ENCODE measurements at regions of chr2 and their contacts with region 1.

Region 1: GRCh38 chr2:179440642-179441251 is 176.1 kb upstream of the SESTD1 start:
- DNase-seq: peak in 2 of 9 experiments; percentile 14 to 49
- ATAC-seq: no peak
- H3K4me3 ChIP-seq: no peak overlapping the region
- H3K4me3 Mint-ChIP-seq: no peak overlapping the region
- H3K27ac ChIP-seq: no peak overlapping the region
- H3K27ac Mint-ChIP-seq: no peak overlapping the region
- H3K4me1 ChIP-seq: no peaks in the 10 kb centered on the region
- H3K4me1 Mint-ChIP-seq: no peaks in the 10 kb centered on the region
- H3K27me3 ChIP-seq: no peaks in the 10 kb centered on the region
- H3K27me3 Mint-ChIP-seq: peaks cover 18% of the 10 kb centered on the region
- CTCF ChIP-seq: peak; percentile 63

Region 2: DNA sequence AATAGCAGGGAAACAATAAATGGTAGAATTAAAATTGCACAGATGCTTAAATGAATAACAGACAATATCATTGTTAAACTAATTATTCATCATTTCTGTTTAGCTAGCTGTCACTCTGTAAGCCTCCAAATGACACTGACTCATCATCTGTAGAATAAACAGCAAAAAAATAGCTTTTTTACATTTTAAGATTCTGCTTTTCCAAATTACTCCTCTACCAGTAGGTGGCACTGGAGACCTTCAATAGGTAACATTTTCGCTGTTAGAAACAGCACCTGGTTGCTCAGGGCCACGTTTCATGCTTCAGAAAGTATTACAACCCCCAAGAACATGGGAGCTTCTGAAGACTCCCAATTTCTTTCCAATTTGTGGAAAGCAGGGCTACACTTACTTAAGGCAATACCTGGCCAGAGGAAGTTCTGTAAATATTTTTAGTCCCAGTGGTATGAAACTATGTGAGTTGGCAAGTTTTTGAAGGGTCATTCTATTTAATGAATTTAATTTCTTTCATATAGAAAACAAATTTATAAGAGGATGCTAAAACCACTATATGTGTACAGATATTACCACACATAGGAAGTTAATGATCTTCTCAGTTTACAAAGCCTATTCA is 678.9 kb before region 1 on chr2:
- CTCF ChIA-PET with region 1: interaction called, 3 read pairs
- POLR2A ChIA-PET with region 1: no interaction called
- intact Hi-C with region 1: loop called (anchors 2 kb)
- DNase-seq: peak in 4 of 9 experiments; percentile 16 to 57 (median 33)
- ATAC-seq: peak; percentile 29
- H3K4me3 ChIP-seq: no peak overlapping the region
- H3K4me3 Mint-ChIP-seq: no peak overlapping the region
- H3K27ac ChIP-seq: no peak overlapping the region
- H3K27ac Mint-ChIP-seq: no peak overlapping the region
- H3K4me1 ChIP-seq: no peaks in the 10 kb centered on the region
- H3K4me1 Mint-ChIP-seq: no peaks in the 10 kb centered on the region
- H3K27me3 ChIP-seq: no peaks in the 10 kb centered on the region
- H3K27me3 Mint-ChIP-seq: no peaks in the 10 kb centered on the region
- CTCF ChIP-seq: peak; percentile 90

Region 3: GRCh38 chr2:178796079-178796677 is 644.6 kb before region 1 on chr2:
- CTCF ChIA-PET with region 1: no interaction called
- POLR2A ChIA-PET with region 1: no interaction called
- intact Hi-C with region 1: loop called (anchors 2 to 10 kb)
- DNase-seq: peak in 2 of 9 experiments; percentile 17 to 47
- ATAC-seq: no peak
- H3K4me3 ChIP-seq: no peak overlapping the region
- H3K4me3 Mint-ChIP-seq: no peak overlapping the region
- H3K27ac ChIP-seq: no peak overlapping the region
- H3K27ac Mint-ChIP-seq: no peak overlapping the region
- H3K4me1 ChIP-seq: no peaks in the 10 kb centered on the region
- H3K4me1 Mint-ChIP-seq: no peaks in the 10 kb centered on the region
- H3K27me3 ChIP-seq: no peaks in the 10 kb centered on the region
- H3K27me3 Mint-ChIP-seq: no peaks in the 10 kb centered on the region
- CTCF ChIP-seq: peak; percentile 70

Region 4: GRCh38 chr2:178891265-178891958 is 549.3 kb before region 1 on chr2:
- CTCF ChIA-PET with region 1: interaction called, 3 read pairs
- POLR2A ChIA-PET with region 1: no interaction called
- intact Hi-C with region 1: loop called in 1 of 2 experiments (anchors 2 kb)
- DNase-seq: peak; percentile 9 to 69 (median 55)
- ATAC-seq: peak; percentile 79
- H3K4me3 ChIP-seq: no peak overlapping the region
- H3K4me3 Mint-ChIP-seq: no peak overlapping the region
- H3K27ac ChIP-seq: no peak overlapping the region
- H3K27ac Mint-ChIP-seq: no peak overlapping the region
- H3K4me1 ChIP-seq: no peaks in the 10 kb centered on the region
- H3K4me1 Mint-ChIP-seq: peaks cover 7% of the 10 kb centered on the region
- H3K27me3 ChIP-seq: no peaks in the 10 kb centered on the region
- H3K27me3 Mint-ChIP-seq: no peaks in the 10 kb centered on the region
- CTCF ChIP-seq: peak; percentile 93

Region 5: GRCh38 chr2:179218848-179219594 is 221.7 kb before region 1 on chr2:
- CTCF ChIA-PET with region 1: interaction called, 17 read pairs
- POLR2A ChIA-PET with region 1: no interaction called
- intact Hi-C with region 1: loop called (anchors 1 kb)
- DNase-seq: peak; percentile 2 to 74 (median 42)
- ATAC-seq: peak; percentile 36
- H3K4me3 ChIP-seq: no peak overlapping the region
- H3K4me3 Mint-ChIP-seq: no peak overlapping the region
- H3K27ac ChIP-seq: no peak overlapping the region
- H3K27ac Mint-ChIP-seq: no peak overlapping the region
- H3K4me1 ChIP-seq: no peaks in the 10 kb centered on the region
- H3K4me1 Mint-ChIP-seq: no peaks in the 10 kb centered on the region
- H3K27me3 ChIP-seq: no peaks in the 10 kb centered on the region
- H3K27me3 Mint-ChIP-seq: no peaks in the 10 kb centered on the region
- CTCF ChIP-seq: peak; percentile 82

Region 6: DNA sequence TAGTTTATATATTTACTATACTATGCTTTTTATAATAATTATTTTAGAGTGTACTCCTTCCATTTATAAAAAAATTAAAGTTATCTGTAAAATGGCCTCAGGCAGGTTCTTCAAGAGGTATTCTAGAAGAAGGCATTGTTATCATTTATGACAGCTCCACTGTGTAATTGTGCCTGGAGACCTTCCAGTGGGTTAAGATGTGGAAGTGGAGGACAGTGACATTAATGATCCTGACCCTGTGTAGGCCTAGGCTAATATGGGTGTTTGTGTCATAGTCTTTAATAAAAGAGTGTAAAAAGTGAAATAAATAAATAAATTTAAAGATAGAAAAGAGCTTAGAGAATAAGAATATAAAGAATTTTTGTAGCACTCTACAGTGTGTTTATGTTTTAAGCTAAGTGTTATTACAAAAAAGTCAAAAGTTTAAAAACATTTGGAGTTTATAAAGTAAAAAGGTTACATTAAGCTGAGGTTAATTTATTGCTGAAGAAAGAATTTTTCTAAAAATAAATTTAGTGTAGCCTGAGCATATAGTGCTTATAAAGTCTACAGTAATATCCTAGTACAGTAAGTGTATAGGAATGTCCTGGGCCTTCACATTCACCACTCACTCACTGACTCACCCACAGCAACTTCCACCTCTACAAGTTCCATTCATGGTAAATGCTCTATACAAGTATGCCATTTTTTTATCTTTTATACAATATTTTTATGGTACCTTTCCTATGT is 13.9 kb after region 1 on chr2:
- CTCF ChIA-PET with region 1: no interaction called
- POLR2A ChIA-PET with region 1: no interaction called
- intact Hi-C with region 1: no loop called
- DNase-seq: no peak
- ATAC-seq: no peak
- H3K4me3 ChIP-seq: no peak overlapping the region
- H3K4me3 Mint-ChIP-seq: no peak overlapping the region
- H3K27ac ChIP-seq: no peak overlapping the region
- H3K27ac Mint-ChIP-seq: no peak overlapping the region
- H3K4me1 ChIP-seq: no peaks in the 10 kb centered on the region
- H3K4me1 Mint-ChIP-seq: no peaks in the 10 kb centered on the region
- H3K27me3 ChIP-seq: no peaks in the 10 kb centered on the region
- H3K27me3 Mint-ChIP-seq: no peaks in the 10 kb centered on the region
- CTCF ChIP-seq: no peak